ENCODE measurements at regions of chr1 and their contacts with region 1.

Region 1: GRCh38 chr1:43073490-43074230 is 98.4 kb downstream of the EBNA1BP2 start:
- DNase-seq: peak; percentile 85
- ATAC-seq: peak; percentile 90
- H3K4me3 Mint-ChIP-seq: no peak overlapping the region
- H3K27ac Mint-ChIP-seq: peak overlapping the region; percentile 47
- H3K4me1 Mint-ChIP-seq: peaks cover 2% of the 10 kb centered on the region
- H3K27me3 Mint-ChIP-seq: no peaks in the 10 kb centered on the region
- CTCF ChIP-seq: peak; percentile 84

Region 2: GRCh38 chr1:42777852-42778251 is 295.8 kb before region 1 on chr1:
- CTCF ChIA-PET with region 1: interaction called, 28 read pairs
- POLR2A ChIA-PET with region 1: no interaction called
- intact Hi-C with region 1: no loop called
- DNase-seq: peak; percentile 56
- ATAC-seq: peak; percentile 82
- H3K4me3 Mint-ChIP-seq: no peak overlapping the region
- H3K27ac Mint-ChIP-seq: no peak overlapping the region
- H3K4me1 Mint-ChIP-seq: peaks cover 28% of the 10 kb centered on the region
- H3K27me3 Mint-ChIP-seq: no peaks in the 10 kb centered on the region
- CTCF ChIP-seq: peak; percentile 76

Region 3: GRCh38 chr1:42913426-42914091 is 160.1 kb before region 1 on chr1:
- CTCF ChIA-PET with region 1: interaction called, 426 read pairs
- POLR2A ChIA-PET with region 1: interaction called, 4 read pairs
- intact Hi-C with region 1: loop called (anchors 1 kb)
- DNase-seq: peak; percentile 72
- ATAC-seq: peak; percentile 95
- H3K4me3 Mint-ChIP-seq: no peak overlapping the region
- H3K27ac Mint-ChIP-seq: no peak overlapping the region
- H3K4me1 Mint-ChIP-seq: peaks cover 5% of the 10 kb centered on the region
- H3K27me3 Mint-ChIP-seq: no peaks in the 10 kb centered on the region
- CTCF ChIP-seq: peak; percentile 84

Region 4: GRCh38 chr1:42936309-42937078 is 137.2 kb before region 1 on chr1:
- CTCF ChIA-PET with region 1: interaction called, 29 read pairs
- POLR2A ChIA-PET with region 1: interaction called, 3 read pairs
- intact Hi-C with region 1: no loop called
- DNase-seq: peak; percentile 60
- ATAC-seq: peak; percentile 45
- H3K4me3 Mint-ChIP-seq: no peak overlapping the region
- H3K27ac Mint-ChIP-seq: peak overlapping the region; percentile 79
- H3K4me1 Mint-ChIP-seq: peaks cover 94% of the 10 kb centered on the region
- H3K27me3 Mint-ChIP-seq: no peaks in the 10 kb centered on the region
- CTCF ChIP-seq: no peak

Region 5: DNA sequence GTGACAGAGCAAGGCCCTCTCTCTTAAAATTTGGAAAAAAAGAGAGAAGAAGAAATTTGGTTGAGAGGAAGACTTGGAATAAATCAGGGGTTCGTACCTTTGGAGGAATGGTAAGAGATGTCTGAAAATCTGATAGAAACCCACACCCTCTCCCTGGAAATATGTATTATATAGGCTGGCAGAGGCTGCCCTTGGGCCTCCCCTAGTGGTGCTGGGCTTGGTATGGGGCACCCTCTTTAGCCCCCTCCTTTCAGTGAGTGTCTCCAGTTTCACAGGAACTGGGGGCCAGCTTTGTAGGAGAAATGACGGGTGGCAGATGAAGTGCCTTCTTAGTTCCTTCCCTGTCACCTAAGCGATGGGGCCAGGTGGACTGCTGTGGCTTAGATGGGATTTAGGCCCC is 32.1 kb before region 1 on chr1:
- CTCF ChIA-PET with region 1: interaction called, 18 read pairs
- POLR2A ChIA-PET with region 1: no interaction called
- intact Hi-C with region 1: no loop called
- DNase-seq: no peak
- ATAC-seq: no peak
- H3K4me3 Mint-ChIP-seq: no peak overlapping the region
- H3K27ac Mint-ChIP-seq: no peak overlapping the region
- H3K4me1 Mint-ChIP-seq: peaks cover 2% of the 10 kb centered on the region
- H3K27me3 Mint-ChIP-seq: no peaks in the 10 kb centered on the region
- CTCF ChIP-seq: no peak

Region 6: DNA sequence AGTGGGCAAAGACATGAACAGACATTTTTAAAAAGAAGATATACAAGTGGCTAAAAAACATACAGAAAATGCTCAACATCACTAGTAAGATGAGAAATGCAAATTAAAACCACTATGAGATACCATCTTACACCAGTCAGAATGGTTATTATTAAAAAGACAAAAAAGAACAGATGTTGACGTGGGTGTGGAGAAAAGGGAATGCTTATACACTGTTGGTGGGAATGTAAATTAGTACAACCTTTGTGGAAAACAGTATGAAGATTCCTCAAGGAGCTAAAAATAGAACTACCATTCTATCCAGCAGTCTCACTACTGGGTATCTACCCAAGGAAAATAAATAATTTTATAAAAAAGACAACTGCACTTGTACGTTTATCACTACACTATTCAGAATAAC is 24.5 kb after region 1 on chr1:
- CTCF ChIA-PET with region 1: interaction called, 18 read pairs
- POLR2A ChIA-PET with region 1: no interaction called
- intact Hi-C with region 1: no loop called
- DNase-seq: no peak
- ATAC-seq: no peak
- H3K4me3 Mint-ChIP-seq: no peak overlapping the region
- H3K27ac Mint-ChIP-seq: no peak overlapping the region
- H3K4me1 Mint-ChIP-seq: no peaks in the 10 kb centered on the region
- H3K27me3 Mint-ChIP-seq: peaks cover 7% of the 10 kb centered on the region
- CTCF ChIP-seq: no peak

Region 7: GRCh38 chr1:43893006-43893405 is 819.3 kb after region 1 on chr1:
- CTCF ChIA-PET with region 1: no interaction called
- POLR2A ChIA-PET with region 1: no interaction called
- intact Hi-C with region 1: no loop called
- DNase-seq: no peak
- ATAC-seq: no peak
- H3K4me3 Mint-ChIP-seq: no peak overlapping the region
- H3K27ac Mint-ChIP-seq: no peak overlapping the region
- H3K4me1 Mint-ChIP-seq: no peaks in the 10 kb centered on the region
- H3K27me3 Mint-ChIP-seq: no peaks in the 10 kb centered on the region
- CTCF ChIP-seq: no peak